ENCODE measurements at regions of chr16 and their contacts with region 1.

Region 1: GRCh38 chr16:58515125-58515870 is at the start of gene SETD6:
- DNase-seq: peak; percentile 41
- H3K4me3 ChIP-seq: peak within 1 kb of the TSS; percentile 56
- H3K27me3 ChIP-seq: no peaks in the 10 kb centered on the region
- CTCF ChIP-seq: peak; percentile 28
- polyA plus RNA-seq, gene SETD6: 7.4 and 8.2 TPM in 2 replicates

Region 2: DNA sequence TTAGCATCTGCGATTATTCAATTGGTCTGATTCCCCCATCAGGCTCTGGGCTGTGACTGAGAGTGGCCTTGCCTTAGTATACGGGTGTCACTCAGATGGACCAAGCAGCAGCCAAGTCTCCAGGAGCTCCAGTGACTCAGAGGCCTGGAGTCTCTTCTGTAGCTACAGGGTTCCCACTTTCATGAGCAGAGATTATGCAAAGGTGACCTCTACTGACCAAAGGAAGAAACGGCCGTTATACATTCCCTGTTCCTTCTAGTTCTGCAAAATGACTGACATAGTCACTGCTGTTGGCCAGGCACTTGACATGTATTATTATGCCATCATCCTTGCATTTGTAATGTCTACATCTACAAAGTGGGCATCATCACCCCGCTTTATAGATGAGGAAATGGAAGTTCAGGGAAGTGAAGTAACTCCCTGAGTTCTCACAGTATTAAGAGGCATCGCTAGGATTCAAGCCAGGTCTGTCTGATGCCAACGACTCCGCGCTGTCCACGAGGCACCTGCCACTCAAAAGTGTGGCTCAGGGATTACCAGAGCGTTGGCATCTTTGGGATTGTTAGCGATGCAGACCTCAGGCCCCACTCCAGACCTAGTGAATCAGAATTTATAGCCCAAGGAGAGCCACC is 146.0 kb after region 1 on chr16:
- CTCF ChIA-PET with region 1: interaction called, 30 read pairs
- POLR2A ChIA-PET with region 1: no interaction called
- DNase-seq: peak; percentile 46
- H3K4me3 ChIP-seq: no peak overlapping the region
- H3K27me3 ChIP-seq: no peaks in the 10 kb centered on the region
- CTCF ChIP-seq: peak; percentile 70

Measured in BJ (cell line).